ENCODE measurements at regions of chr14 and their contacts with region 1.

Region 1: GRCh38 chr14:67599698-67600561 is at the start of gene PIGH:
- DNase-seq: peak; percentile 89 to 96 (median 94)
- ATAC-seq: peak; percentile 98
- H3K4me3 ChIP-seq: peak within 1 kb of the TSS; percentile 70
- H3K4me3 Mint-ChIP-seq: peak within 1 kb of the TSS; percentile 87 to 100 (median 98)
- H3K27ac ChIP-seq: peak within 1 kb of the TSS; percentile 86
- H3K27ac Mint-ChIP-seq: peak within 1 kb of the TSS; percentile 87 to 99 (median 97)
- H3K4me1 ChIP-seq: peaks cover 16 to 22% of the 10 kb centered on the region in 2 donors
- H3K4me1 Mint-ChIP-seq: peaks cover 26 to 57% (median 46%) of the 10 kb centered on the region in 7 donors
- H3K27me3 ChIP-seq: no peaks in the 10 kb centered on the region
- H3K27me3 Mint-ChIP-seq: peaks cover 0 to 10% (median 0%) of the 10 kb centered on the region in 5 donors
- total RNA-seq, gene PIGH: 14.3 to 42.1 (median 34.5) TPM

Region 2: GRCh38 chr14:67240978-67241414 is 358.9 kb before region 1 on chr14:
- CTCF ChIA-PET with region 1: no interaction called
- POLR2A ChIA-PET with region 1: no interaction called
- intact Hi-C with region 1: loop called in 1 of 2 experiments (anchors 5 kb)
- DNase-seq: peak; percentile 87 to 93 (median 91)
- ATAC-seq: peak; percentile 97
- H3K4me3 ChIP-seq: peak overlapping the region; percentile 84
- H3K4me3 Mint-ChIP-seq: peak overlapping the region; percentile 81 to 95 (median 91)
- H3K27ac ChIP-seq: peak overlapping the region; percentile 74
- H3K27ac Mint-ChIP-seq: peak overlapping the region; percentile 8 to 92 (median 85)
- H3K4me1 ChIP-seq: peaks cover 6 to 10% of the 10 kb centered on the region in 2 donors
- H3K4me1 Mint-ChIP-seq: peaks cover 16 to 37% (median 28%) of the 10 kb centered on the region in 7 donors
- H3K27me3 ChIP-seq: no peaks in the 10 kb centered on the region
- H3K27me3 Mint-ChIP-seq: peaks cover 0 to 33% (median 0%) of the 10 kb centered on the region in 5 donors

Region 3: DNA sequence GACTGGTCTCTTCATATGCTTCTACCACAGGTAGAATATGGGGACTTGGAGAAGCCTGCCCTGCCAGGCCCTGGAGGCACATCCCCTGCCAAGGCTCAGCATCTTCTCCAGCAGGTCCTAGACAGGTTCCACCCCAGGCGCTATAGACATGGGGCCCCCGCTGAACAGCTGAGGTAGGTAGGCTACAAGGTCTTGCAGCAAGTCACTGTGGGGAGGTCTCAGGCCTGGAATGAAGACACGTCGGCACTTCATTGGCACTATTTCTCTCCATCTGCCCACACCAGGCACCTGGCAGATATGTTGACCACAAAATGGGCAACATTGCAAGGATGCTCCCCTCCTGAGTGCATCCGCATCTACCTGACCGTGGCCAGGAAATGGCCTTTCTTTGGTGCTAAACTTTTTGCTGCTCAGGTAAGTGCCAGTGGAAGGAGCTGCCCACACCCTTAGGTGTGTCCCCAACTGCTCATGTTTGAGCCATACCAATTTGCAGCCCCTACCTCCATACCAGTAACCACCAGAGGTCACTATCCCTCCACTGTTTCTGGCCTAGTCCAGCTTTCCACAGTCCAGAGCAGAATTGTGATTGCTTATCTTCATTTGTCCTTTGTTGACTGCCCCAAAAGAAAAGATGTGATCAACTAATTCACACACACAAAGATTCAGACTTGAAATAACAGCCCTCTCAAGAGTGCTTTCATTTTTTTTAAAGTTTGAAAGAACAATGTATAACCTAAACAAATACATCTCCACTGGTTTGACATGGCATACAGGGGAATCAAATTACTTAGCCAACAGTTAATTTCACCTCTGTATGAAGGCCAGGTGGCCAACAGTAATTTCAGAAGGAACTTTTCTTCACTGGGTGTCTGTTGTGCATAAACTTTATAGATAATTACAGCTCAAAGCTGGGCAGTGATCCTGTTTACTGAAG is 16.0 kb before region 1 on chr14:
- CTCF ChIA-PET with region 1: interaction called, 5 read pairs
- POLR2A ChIA-PET with region 1: interaction called, 3 read pairs
- intact Hi-C with region 1: loop called in 1 of 2 experiments (anchors 1 kb)
- DNase-seq: peak in 5 of 9 donors; percentile 26 to 44 (median 35)
- ATAC-seq: peak; percentile 79
- H3K4me3 ChIP-seq: no peak overlapping the region
- H3K4me3 Mint-ChIP-seq: no peak overlapping the region
- H3K27ac ChIP-seq: no peak overlapping the region
- H3K27ac Mint-ChIP-seq: no peak overlapping the region
- H3K4me1 ChIP-seq: no peaks in the 10 kb centered on the region
- H3K4me1 Mint-ChIP-seq: peaks cover 0 to 11% (median 0%) of the 10 kb centered on the region in 7 donors
- H3K27me3 ChIP-seq: no peaks in the 10 kb centered on the region
- H3K27me3 Mint-ChIP-seq: no peaks in the 10 kb centered on the region

Region 4: GRCh38 chr14:67666750-67667449 is 67.0 kb after region 1 on chr14:
- CTCF ChIA-PET with region 1: interaction called, 6 read pairs
- POLR2A ChIA-PET with region 1: no interaction called
- intact Hi-C with region 1: loop called (anchors 1 kb)
- DNase-seq: peak in 7 of 9 donors; percentile 43 to 64 (median 52)
- ATAC-seq: peak; percentile 88
- H3K4me3 ChIP-seq: no peak overlapping the region
- H3K4me3 Mint-ChIP-seq: peak overlapping the region in 2 of 10 donors; percentile 21 to 23
- H3K27ac ChIP-seq: no peak overlapping the region
- H3K27ac Mint-ChIP-seq: peak overlapping the region; percentile 14 to 88 (median 58)
- H3K4me1 ChIP-seq: peaks cover 5 to 7% of the 10 kb centered on the region in 2 donors
- H3K4me1 Mint-ChIP-seq: peaks cover 32 to 75% (median 63%) of the 10 kb centered on the region in 7 donors
- H3K27me3 ChIP-seq: no peaks in the 10 kb centered on the region
- H3K27me3 Mint-ChIP-seq: no peaks in the 10 kb centered on the region

Region 5: DNA sequence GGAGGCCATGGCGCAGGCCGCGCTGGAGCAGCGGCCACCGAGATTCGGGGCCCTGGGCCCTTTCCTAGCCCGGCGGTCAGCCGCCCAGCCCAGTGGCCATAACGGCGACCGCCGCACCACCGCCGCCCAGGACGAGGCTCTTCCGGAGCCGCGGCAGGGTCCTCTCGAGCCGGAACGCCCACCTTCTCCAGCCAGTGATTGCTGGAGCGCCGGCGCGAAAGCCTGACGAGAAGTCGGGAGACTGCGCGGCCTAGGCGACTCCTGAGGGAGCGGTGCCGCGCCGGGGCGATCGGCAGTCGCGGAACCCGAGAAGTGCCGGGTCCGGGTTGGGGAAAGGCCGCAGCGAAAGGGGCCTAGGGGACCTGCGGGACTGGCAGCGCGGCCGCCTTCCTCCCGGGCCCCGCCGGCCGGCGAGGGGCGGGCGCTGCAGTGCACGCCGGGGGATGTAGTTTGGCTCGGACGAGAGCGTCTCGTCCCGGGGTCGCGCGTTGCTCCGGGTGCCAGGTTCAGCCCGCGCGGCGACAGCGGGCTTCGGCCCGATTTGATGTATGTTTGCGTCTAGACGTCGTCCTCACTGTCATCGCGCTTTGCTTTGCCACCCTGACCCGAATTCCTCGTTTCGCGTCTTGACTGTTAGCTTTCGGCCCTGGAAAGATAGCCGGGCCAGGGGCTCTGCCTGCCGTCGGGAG is 74.7 kb after region 1 on chr14 and contains the start of gene VTI1B:
- CTCF ChIA-PET with region 1: interaction called, 4 read pairs
- POLR2A ChIA-PET with region 1: interaction called, 14 read pairs
- intact Hi-C with region 1: loop called (anchors 1 to 2 kb)
- DNase-seq: peak; percentile 71 to 84 (median 80)
- ATAC-seq: peak; percentile 95
- H3K4me3 ChIP-seq: peak within 1 kb of the TSS; percentile 65
- H3K4me3 Mint-ChIP-seq: peak within 1 kb of the TSS; percentile 91 to 96 (median 93)
- H3K27ac ChIP-seq: peak within 1 kb of the TSS; percentile 95
- H3K27ac Mint-ChIP-seq: peak within 1 kb of the TSS; percentile 82 to 96 (median 92)
- H3K4me1 ChIP-seq: peaks cover 17 to 21% of the 10 kb centered on the region in 2 donors
- H3K4me1 Mint-ChIP-seq: peaks cover 22 to 62% (median 55%) of the 10 kb centered on the region in 7 donors
- H3K27me3 ChIP-seq: no peaks in the 10 kb centered on the region
- H3K27me3 Mint-ChIP-seq: no peaks in the 10 kb centered on the region
- total RNA-seq, gene VTI1B: 49.2 to 82.4 (median 65.9) TPM

Measured in naive thymus-derived CD4-positive, alpha-beta T cell (primary cell).